Heart left ventricle (tissue), 16 donors: ENCODE measurements at regions of chr3 and their contacts with region 1.

Region 1: GRCh38 chr3:69855436-69856162 is 116.3 kb downstream of the MITF start:
- DNase-seq: no peak
- ATAC-seq: peak in 3 of 4 donors; percentile 41 to 69 (median 57)
- H3K4me3 ChIP-seq: no peak overlapping the region
- H3K27ac ChIP-seq: peak overlapping the region in 9 of 12 donors; percentile 4 to 64 (median 42)
- H3K4me1 ChIP-seq: peaks cover 0 to 55% (median 19%) of the 10 kb centered on the region in 12 donors
- H3K27me3 ChIP-seq: no peaks in the 10 kb centered on the region
- CTCF ChIP-seq: peak in 11 of 12 donors; percentile 26 to 64 (median 55)
- POLR2A ChIP-seq: no peak

Region 2: DNA sequence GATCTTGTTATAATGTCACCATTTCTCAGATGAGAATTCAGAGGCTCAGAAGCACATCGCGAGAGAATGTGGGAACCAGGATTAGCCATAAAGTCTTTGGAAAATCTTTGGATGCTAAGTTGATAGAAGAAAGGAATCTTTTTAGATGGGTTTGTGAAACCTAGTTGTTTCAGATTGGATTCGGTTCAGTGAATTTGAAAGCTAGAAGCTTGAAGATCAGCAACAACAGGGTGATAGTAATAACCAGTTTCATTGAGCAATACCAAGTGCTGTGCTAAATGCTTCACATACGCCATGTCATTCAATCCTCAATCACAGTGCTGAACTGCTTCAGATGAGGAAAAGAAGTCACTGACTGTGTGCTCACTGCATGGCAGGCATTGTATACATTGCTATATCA is 163.7 kb before region 1 on chr3:
- intact Hi-C with region 1: loop called (anchors 2 to 5 kb)
- DNase-seq: no peak
- ATAC-seq: no peak
- H3K4me3 ChIP-seq: no peak overlapping the region
- H3K27ac ChIP-seq: no peak overlapping the region
- H3K4me1 ChIP-seq: peaks cover 0 to 11% (median 0%) of the 10 kb centered on the region in 12 donors
- H3K27me3 ChIP-seq: no peaks in the 10 kb centered on the region
- CTCF ChIP-seq: no peak
- POLR2A ChIP-seq: no peak

Region 3: GRCh38 chr3:69739204-69740102 is 116.1 kb before region 1 on chr3 and contains the start of gene MITF:
- intact Hi-C with region 1: loop called in 1 of 10 experiments (anchors 5 kb)
- DNase-seq: peak; percentile 94 to 97 (median 95)
- ATAC-seq: peak; percentile 95 to 98 (median 98)
- H3K4me3 ChIP-seq: peak within 1 kb of the TSS; percentile 67 to 98 (median 84)
- H3K27ac ChIP-seq: peak within 1 kb of the TSS; percentile 79 to 94 (median 92)
- H3K4me1 ChIP-seq: peaks cover 0 to 51% (median 26%) of the 10 kb centered on the region in 12 donors
- H3K27me3 ChIP-seq: no peaks in the 10 kb centered on the region
- CTCF ChIP-seq: peak in 1 of 12 donors; percentile 6
- POLR2A ChIP-seq: peak; percentile 71 to 91
- total RNA-seq, gene MITF: 61.4 to 114 (median 86.9) TPM

Region 4: GRCh38 chr3:69770219-69770618 is 85.4 kb before region 1 on chr3:
- intact Hi-C with region 1: loop called in 1 of 10 experiments (anchors 10 kb)
- DNase-seq: no peak
- ATAC-seq: no peak
- H3K4me3 ChIP-seq: no peak overlapping the region
- H3K27ac ChIP-seq: peak overlapping the region in 3 of 12 donors; percentile 11 to 39 (median 22)
- H3K4me1 ChIP-seq: peaks cover 0 to 92% (median 44%) of the 10 kb centered on the region in 12 donors
- H3K27me3 ChIP-seq: no peaks in the 10 kb centered on the region
- CTCF ChIP-seq: no peak
- POLR2A ChIP-seq: no peak